Breast epithelium (tissue), 4 donors: ENCODE measurements at regions of chr11 and their contacts with region 1.

Region 1: GRCh38 chr11:13343931-13344717 is 66.5 kb downstream of the BMAL1 start:
- DNase-seq: peak; percentile 76 to 77
- H3K4me3 ChIP-seq: no peak overlapping the region
- H3K27ac ChIP-seq: no peak overlapping the region
- H3K4me1 ChIP-seq: peaks cover 4 to 10% of the 10 kb centered on the region in 2 donors
- H3K27me3 ChIP-seq: no peaks in the 10 kb centered on the region
- CTCF ChIP-seq: peak; percentile 68 to 85 (median 77)
- POLR2A ChIP-seq: no peak

Region 2: GRCh38 chr11:13207665-13208594 is 136.2 kb before region 1 on chr11:
- intact Hi-C with region 1: loop called (anchors 5 kb)
- DNase-seq: no peak
- H3K4me3 ChIP-seq: peak overlapping the region; percentile 34 to 59 (median 39)
- H3K27ac ChIP-seq: peak overlapping the region; percentile 79 to 84
- H3K4me1 ChIP-seq: no peaks in the 10 kb centered on the region
- H3K27me3 ChIP-seq: no peaks in the 10 kb centered on the region
- CTCF ChIP-seq: peak in 1 of 3 donors; percentile 1
- POLR2A ChIP-seq: no peak

Region 3: GRCh38 chr11:14656536-14657457 is 1312.7 kb after region 1 on chr11:
- intact Hi-C with region 1: no loop called
- DNase-seq: no peak
- H3K4me3 ChIP-seq: no peak overlapping the region
- H3K27ac ChIP-seq: no peak overlapping the region
- H3K4me1 ChIP-seq: no peaks in the 10 kb centered on the region
- H3K27me3 ChIP-seq: peaks cover 0 to 10% of the 10 kb centered on the region in 2 donors
- CTCF ChIP-seq: no peak
- POLR2A ChIP-seq: no peak